HEK293 (cell line): ENCODE measurements at regions of chr19 and their contacts with region 1.

Region 1: GRCh38 chr19:40444192-40445028 is at the start of gene SERTAD3:
- H3K4me3 ChIP-seq: peak within 1 kb of the TSS; percentile 67
- H3K27ac ChIP-seq: peak within 1 kb of the TSS; percentile 99
- H3K4me1 ChIP-seq: peaks cover 14% of the 10 kb centered on the region
- CTCF ChIP-seq: peak; percentile 97

Region 2: DNA sequence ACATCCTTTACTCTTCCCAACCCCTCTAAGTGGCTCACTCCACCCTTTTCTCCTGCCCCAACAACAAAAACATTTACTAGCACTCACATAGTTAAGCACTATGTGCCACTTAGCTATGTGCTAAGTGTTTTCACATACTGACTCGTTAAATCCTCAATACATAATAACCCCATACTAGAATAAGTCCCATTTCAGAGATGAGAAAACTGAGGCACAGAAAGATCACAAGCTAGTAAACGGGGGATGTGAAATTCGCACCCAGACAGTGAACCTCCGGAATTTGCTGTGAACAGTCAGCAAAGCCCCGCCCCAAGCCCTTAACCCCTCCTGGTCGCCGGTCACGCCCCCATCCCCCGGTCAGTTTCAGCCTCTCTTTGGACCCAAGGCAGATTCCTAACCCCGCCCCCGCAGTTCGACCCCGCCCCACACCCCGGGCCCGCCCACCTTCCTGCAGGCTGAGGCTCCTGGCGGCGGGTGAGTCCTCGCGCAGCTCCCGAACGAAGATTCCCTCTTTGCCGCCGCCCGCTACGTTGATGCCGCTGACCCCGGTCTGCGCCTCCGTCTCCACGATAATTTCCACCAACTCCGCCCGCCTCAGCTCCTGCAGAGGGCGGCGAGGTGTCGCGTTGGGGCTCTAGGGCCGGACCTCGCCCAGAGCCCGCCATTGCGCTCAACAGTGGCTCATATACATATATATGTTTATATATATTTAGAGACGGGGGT is 41.0 kb before region 1 on chr19:
- CTCF ChIA-PET with region 1: no interaction called
- POLR2A ChIA-PET with region 1: interaction called, 13 read pairs
- H3K4me3 ChIP-seq: peak overlapping the region; percentile 50
- H3K27ac ChIP-seq: peak overlapping the region; percentile 80
- H3K4me1 ChIP-seq: peaks cover 9% of the 10 kb centered on the region
- CTCF ChIP-seq: peak; percentile 68; the same call in 1 of the 2 replicates

Region 3: DNA sequence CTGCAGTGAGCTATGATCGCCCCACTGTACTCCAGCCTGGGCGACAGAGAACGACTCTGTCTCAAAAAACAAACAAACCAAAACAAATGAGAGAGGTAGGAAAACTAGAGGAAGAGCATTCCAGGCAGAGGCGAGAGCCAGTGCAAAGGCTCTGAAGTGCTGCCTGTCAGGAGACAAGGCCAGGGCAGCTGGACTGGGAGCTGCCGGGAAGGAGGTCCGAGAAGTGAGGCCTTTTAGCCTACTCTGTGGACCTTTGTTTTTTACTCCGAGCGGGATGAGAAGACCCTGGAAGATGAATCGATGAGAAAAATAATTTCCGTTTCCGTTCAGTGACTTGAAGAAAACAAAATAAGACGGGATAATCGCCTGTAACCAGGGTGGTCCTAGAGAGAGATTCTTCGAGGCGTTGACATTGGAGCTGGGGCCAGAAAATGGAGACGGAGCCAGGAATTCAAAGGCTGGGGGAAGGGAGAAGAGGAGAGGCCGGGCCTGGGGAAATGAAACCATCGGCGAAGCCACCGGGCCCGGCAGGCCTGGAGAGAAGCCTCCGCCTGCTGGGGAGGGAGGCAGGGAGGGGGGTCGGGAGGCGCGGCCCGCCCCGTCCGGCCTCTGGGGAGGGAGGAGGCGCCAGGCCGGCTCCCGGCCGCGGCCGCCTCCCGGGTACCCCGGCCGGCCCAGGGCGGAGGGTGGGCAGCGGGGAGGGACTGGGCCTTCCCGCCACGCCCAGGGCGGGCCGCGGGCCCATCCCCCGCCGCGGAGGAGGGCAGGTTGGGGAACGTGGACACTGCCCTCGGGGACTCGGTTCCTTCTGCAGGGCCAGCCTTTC is 10.8 kb before region 1 on chr19:
- CTCF ChIA-PET with region 1: interaction called, 5 read pairs
- POLR2A ChIA-PET with region 1: interaction called, 428 read pairs
- H3K4me3 ChIP-seq: peak overlapping the region; percentile 34
- H3K27ac ChIP-seq: peak overlapping the region; percentile 100
- H3K4me1 ChIP-seq: peaks cover 16% of the 10 kb centered on the region
- CTCF ChIP-seq: no peak

Region 4: GRCh38 chr19:40507892-40508291 is 63.5 kb after region 1 on chr19:
- CTCF ChIA-PET with region 1: no interaction called
- POLR2A ChIA-PET with region 1: no interaction called
- H3K4me3 ChIP-seq: no peak overlapping the region
- H3K27ac ChIP-seq: no peak overlapping the region
- H3K4me1 ChIP-seq: no peaks in the 10 kb centered on the region
- CTCF ChIP-seq: no peak